ENCODE measurements at regions of chr5 and their contacts with region 1.

Region 1: DNA sequence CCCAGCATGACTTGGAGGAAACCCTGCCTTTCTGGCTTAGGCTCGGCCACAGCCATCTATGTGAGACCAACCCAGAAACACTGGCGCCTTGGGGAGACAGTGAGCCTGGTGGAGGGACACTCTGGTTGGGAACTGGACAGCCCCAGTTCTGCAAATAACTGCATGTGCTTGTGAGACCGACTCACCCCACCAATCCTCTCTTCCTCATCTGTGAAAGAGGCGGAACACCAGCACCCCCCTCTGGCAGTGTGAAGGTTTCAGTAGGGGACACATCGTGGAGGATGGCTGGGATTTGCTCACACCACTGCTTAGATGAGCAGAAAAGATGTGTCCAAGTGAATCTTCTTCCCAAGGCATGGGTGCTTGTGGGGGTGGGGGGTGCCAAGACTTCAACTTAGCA is 43.4 kb upstream of the N4BP3 start:
- DNase-seq: peak; percentile 59 to 77 (median 68)
- ATAC-seq: peak; percentile 95
- H3K4me3 ChIP-seq: no peak overlapping the region
- H3K27ac ChIP-seq: no peak overlapping the region
- H3K4me1 ChIP-seq: peaks cover 0 to 3% of the 10 kb centered on the region in 2 experiments; a peak in 2 of 5 replicates
- H3K27me3 ChIP-seq: peaks cover 19 to 29% of the 10 kb centered on the region in 2 experiments
- CTCF ChIP-seq: peak; percentile 78 to 88 (median 80)
- EP300 ChIP-seq: no peak
- POLR2A ChIP-seq: no peak
- RAD21 ChIP-seq: peak; percentile 60 to 80

Region 2: GRCh38 chr5:177599731-177600507 is 470.0 kb before region 1 on chr5 and contains the start of gene B4GALT7:
- CTCF ChIA-PET with region 1: no interaction called
- POLR2A ChIA-PET with region 1: no interaction called
- in situ Hi-C with region 1: loop called (anchors 25 kb)
- intact Hi-C with region 1: loop called (anchors 5 kb)
- DNase-seq: peak; percentile 89 to 91 (median 90)
- ATAC-seq: peak; percentile 96
- H3K4me3 ChIP-seq: peak within 1 kb of the TSS; percentile 92
- H3K27ac ChIP-seq: peak within 1 kb of the TSS; percentile 73
- H3K4me1 ChIP-seq: peaks cover 13 to 30% of the 10 kb centered on the region in 2 experiments; a peak in 4 of 5 replicates
- H3K27me3 ChIP-seq: no peaks in the 10 kb centered on the region
- CTCF ChIP-seq: no peak
- EP300 ChIP-seq: no peak
- POLR2A ChIP-seq: peak; percentile 82
- RAD21 ChIP-seq: no peak
- polyA plus RNA-seq, gene B4GALT7: 0.34 to 0.88 TPM